Mucosa of descending colon (tissue), 3 donors: ENCODE measurements at regions of chr11 and their contacts with region 1.

Region 1: GRCh38 chr11:1050581-1051355 is 14.2 kb upstream of the MUC6 start:
- DNase-seq: peak; percentile 85 to 93 (median 89)
- ATAC-seq: peak; percentile 78
- H3K4me3 ChIP-seq: no peak overlapping the region
- H3K4me1 ChIP-seq: peaks cover 35% of the 10 kb centered on the region
- CTCF ChIP-seq: peak; percentile 95

Region 2: DNA sequence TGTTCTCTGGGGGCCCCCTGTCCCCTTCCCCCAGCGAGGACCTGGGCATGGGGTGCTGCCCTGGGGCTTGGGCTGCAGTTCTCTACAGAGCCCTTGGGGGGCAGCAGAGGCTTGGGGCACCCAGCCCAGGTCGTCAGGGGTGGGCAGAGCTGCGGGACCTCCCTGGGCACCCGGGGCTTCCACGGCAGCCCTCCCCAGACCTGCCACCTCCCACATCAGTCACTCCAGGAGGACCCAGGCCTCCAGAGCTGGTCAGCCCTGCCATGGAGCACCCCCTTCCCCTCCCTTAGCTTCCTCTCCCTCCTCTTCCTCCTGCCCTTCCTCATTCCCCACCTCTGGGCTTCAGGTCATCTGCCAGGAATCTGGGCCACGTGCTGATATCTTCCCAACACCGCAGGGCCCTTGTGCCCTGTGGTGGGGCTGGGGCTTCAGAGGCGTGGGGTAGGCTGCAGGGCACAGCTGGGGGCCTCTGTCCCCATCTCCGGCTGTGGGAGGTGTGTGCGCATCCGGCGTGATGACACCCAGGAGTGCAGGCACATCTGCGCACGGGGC is 202.3 kb before region 1 on chr11:
- intact Hi-C with region 1: loop called in 1 of 2 experiments (anchors 5 kb)
- DNase-seq: peak in 2 of 3 donors; percentile 65 to 76
- ATAC-seq: peak; percentile 62
- H3K4me3 ChIP-seq: no peak overlapping the region
- H3K4me1 ChIP-seq: peaks cover 27% of the 10 kb centered on the region
- CTCF ChIP-seq: peak; percentile 93

Region 3: GRCh38 chr11:876519-876918 is 174.2 kb before region 1 on chr11:
- intact Hi-C with region 1: no loop called
- DNase-seq: no peak
- ATAC-seq: no peak
- H3K4me3 ChIP-seq: no peak overlapping the region
- H3K4me1 ChIP-seq: no peaks in the 10 kb centered on the region
- CTCF ChIP-seq: no peak